SK-N-SH (cell line): ENCODE measurements at regions of chr15 and their contacts with region 1.

Region 1: DNA sequence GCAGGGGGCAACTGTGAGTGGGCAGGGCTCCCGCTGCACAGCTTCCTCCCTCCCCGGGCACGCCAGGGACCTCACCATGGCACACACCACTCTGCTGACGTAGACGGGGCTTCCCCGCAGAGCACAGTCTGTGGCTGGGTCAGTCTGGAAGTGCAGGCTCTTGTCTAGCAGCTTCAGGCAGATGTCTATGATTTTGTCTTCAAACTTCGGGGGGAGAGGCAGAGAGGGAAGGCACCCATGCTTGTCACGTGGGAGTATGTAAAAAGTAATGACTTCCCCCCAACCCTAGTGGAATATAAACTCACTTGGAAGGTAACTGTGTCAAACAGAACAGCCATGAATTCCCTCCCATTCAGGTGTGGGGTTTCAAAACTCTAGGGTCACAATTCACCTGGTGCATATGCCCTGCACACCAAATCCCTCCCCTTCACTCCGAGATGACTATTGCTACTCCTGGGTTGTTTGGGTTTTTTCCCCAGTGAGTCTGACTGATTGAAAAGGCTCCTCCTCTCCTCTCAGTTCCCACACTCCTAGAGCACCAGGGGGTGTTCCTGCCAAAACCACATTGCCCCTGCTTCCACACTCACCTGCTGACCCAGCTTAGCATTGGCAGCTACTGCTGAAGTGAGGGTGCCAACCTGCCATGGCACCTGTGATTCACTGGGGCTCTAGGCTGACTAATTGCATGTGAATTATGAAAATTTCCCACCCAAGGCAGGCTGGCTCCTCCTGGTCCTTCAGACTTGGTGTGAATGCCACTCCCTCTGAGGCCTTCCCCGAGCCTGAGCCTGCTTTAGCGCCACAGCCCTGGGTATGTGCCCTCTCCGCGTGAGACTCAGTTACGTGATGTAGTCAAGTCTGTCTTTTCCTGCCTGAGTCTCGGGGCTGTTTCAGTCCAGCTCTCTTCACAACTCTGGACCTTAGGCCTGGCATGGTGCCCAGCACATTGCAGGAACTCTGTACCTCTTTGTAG is 13.0 kb downstream of the TGM5 start:
- DNase-seq: no peak
- H3K4me3 ChIP-seq: no peak overlapping the region
- H3K27ac ChIP-seq: no peak overlapping the region
- H3K4me1 ChIP-seq: no peaks in the 10 kb centered on the region; a peak in 1 of 4 replicates
- H3K27me3 ChIP-seq: peaks cover 19% of the 10 kb centered on the region; the same call in 1 of the 2 replicates
- CTCF ChIP-seq: no peak
- EP300 ChIP-seq: no peak
- RAD21 ChIP-seq: no peak

Region 2: GRCh38 chr15:43118829-43119228 is 134.9 kb before region 1 on chr15:
- CTCF ChIA-PET with region 1: no interaction called
- POLR2A ChIA-PET with region 1: no interaction called
- DNase-seq: no peak
- H3K4me3 ChIP-seq: no peak overlapping the region
- H3K27ac ChIP-seq: no peak overlapping the region
- H3K4me1 ChIP-seq: peaks cover 0 to 3% of the 10 kb centered on the region in 2 experiments; a peak in 1 of 4 replicates
- H3K27me3 ChIP-seq: no peaks in the 10 kb centered on the region; the same call in 1 of the 2 replicates
- CTCF ChIP-seq: no peak
- EP300 ChIP-seq: no peak
- RAD21 ChIP-seq: no peak

Region 3: DNA sequence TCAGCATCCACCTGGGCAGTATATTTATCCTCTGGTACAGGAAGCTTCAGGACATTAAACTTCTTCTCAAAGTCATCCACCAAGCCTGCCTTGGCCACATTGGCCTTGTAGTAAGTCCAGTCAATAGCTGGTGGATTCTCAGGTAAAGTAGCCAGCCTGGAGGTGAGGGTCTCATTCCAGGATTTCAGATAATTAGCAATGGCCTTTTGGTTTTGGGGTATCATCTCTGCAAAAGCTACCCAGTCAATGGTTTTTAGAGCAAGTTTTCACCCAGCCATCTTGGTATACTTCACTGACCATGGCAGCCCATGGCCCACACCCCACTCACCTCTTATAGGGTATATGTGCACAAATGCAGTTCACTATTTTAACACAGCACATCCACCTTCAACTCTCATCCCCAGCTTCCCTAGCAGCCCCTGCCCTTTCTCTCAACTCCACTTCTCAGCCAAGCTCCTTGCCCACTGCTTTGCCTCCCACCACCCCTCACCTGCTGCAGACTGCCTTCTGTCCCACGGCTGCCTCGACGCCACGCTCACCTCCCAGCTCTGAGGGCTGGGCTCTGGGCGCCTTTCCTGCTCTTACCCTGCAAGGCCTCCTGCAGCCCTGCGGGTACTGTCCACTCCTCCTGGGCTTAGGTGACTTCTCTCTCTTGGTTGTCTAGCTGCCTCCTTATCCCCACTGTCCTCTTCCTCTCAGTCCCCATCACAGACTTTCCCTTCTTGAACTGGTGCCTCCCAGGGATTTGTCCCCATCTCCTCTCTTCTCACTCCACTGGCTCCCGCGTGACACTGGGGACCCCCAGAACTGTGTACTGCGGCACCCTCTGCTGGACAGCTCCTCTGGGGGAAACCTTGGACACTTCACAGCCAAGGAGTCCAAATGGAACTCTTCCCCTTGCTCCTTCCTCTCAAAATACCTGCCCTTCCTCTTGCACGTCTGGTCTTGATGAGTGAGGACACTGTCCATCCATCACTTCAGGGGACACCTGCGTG is 14.7 kb after region 1 on chr15:
- CTCF ChIA-PET with region 1: interaction called, 18 read pairs
- POLR2A ChIA-PET with region 1: no interaction called
- DNase-seq: peak; percentile 59
- H3K4me3 ChIP-seq: no peak overlapping the region
- H3K27ac ChIP-seq: no peak overlapping the region
- H3K4me1 ChIP-seq: no peaks in the 10 kb centered on the region
- H3K27me3 ChIP-seq: peaks cover 25% of the 10 kb centered on the region; the same call in 1 of the 2 replicates
- CTCF ChIP-seq: 0 out of 2 replicates have a peak, but pooled peaks have one; percentile 19
- EP300 ChIP-seq: no peak
- RAD21 ChIP-seq: peak; percentile 70

Region 4: GRCh38 chr15:43325039-43325684 is 71.4 kb after region 1 on chr15:
- CTCF ChIA-PET with region 1: no interaction called
- POLR2A ChIA-PET with region 1: no interaction called
- DNase-seq: no peak
- H3K4me3 ChIP-seq: no peak overlapping the region
- H3K27ac ChIP-seq: no peak overlapping the region
- H3K4me1 ChIP-seq: peaks cover 6 to 13% of the 10 kb centered on the region in 2 experiments; a peak in 3 of 4 replicates
- H3K27me3 ChIP-seq: no peaks in the 10 kb centered on the region
- CTCF ChIP-seq: no peak
- EP300 ChIP-seq: no peak
- RAD21 ChIP-seq: no peak